ENCODE measurements at regions of chr1 and their contacts with region 1.

Region 1: DNA sequence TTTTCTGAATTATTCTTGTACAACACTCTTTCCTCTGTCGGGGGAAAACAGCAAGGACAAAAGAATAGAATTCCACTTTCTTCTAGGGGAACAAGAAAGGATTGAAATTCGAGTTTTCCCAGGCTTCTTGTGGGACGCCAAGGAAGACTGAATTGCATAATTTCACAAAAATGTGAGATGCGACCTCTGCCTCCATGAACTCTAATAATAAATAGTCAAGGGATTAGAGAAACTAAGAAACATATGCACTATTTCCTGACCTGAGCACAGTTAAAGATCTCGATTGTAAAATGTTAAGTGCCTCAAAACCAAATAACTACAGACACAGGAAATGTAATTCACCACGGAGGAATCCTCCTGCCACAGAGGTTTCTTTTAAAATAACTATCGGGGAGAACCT is 117.3 kb upstream of the MARK1 start:
- DNase-seq: no peak
- H3K4me3 ChIP-seq: no peak overlapping the region
- CTCF ChIP-seq: no peak
- POLR2A ChIP-seq: no peak

Region 2: DNA sequence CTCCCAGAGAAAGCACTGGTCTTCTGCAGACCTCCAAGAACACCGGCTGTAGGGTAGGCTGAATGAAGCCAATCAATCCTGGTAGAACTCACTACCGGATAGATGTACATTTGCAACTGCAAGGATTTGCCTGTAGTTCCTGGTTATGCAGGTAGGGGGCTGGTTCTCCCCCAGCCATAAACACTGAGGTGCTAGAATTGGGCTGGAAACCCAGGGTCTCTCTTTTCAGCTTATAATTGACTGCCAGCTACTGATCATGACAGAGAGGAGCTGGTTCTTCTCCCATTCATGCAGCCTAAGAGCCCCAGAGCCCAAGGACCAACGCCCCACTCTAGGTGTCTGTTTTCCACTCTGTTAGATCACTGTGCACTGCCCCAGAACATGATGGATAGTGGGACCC is 316.0 kb after region 1 on chr1:
- intact Hi-C with region 1: loop called (anchors 5 kb)
- DNase-seq: no peak
- H3K4me3 ChIP-seq: no peak overlapping the region
- CTCF ChIP-seq: no peak
- POLR2A ChIP-seq: no peak

Region 3: GRCh38 chr1:220787069-220787614 is 376.5 kb after region 1 on chr1:
- intact Hi-C with region 1: no loop called
- DNase-seq: no peak
- H3K4me3 ChIP-seq: peak overlapping the region; percentile 46
- CTCF ChIP-seq: no peak
- POLR2A ChIP-seq: no peak